ENCODE measurements at regions of chr19 and their contacts with region 1.

Region 1: DNA sequence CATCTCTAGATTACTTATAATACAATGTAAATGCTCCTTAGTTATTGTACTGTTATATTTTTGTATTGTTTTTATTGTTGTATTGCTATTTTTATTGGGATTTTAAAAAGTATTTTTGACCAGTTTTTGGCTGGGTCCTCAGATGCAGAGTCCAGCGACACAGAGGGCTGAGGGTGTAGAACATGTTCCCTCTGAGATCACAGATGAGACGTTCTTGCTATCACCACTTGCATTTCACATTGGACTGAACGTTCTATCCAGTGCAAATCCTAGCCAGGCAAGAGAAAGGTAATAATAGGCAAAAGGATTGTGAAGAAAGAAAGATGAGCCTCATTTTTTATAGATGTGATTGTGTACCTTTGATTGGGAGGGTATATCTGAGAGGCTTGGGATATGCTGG is 15.0 kb downstream of the ZSCAN5A start:
- DNase-seq: no peak
- H3K4me3 Mint-ChIP-seq: no peak overlapping the region
- H3K27ac Mint-ChIP-seq: peak overlapping the region; percentile 2
- H3K4me1 Mint-ChIP-seq: peaks cover 22% of the 10 kb centered on the region
- H3K27me3 Mint-ChIP-seq: no peaks in the 10 kb centered on the region

Region 2: DNA sequence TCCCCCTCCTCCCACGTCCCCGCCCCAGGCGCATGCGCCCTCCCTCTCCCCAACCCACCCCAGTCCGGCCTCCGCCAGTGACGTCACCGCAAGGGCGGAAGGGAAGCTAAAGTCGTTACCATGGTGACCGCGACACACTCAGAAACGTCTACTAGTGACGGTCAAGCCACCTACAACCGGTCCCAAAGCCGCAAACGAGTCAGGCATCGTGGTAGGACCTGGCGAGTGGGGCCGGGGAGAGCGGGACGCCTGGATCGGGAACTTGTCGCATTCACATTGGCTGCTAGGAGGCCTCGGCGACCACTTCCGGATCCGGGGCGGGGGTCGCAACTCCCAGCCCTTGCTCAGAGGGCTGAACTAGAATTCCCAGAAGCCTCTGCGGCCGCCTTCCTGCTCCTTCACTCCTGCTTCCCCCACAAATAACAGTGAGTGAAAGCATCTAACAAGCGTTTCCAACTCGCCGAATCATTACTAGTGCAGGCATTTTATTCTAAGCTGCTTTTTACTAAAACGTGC is 14.9 kb after region 1 on chr19 and contains the start of gene ZSCAN5A:
- CTCF ChIA-PET with region 1: interaction called, 13 read pairs
- POLR2A ChIA-PET with region 1: interaction called, 3 read pairs
- DNase-seq: peak; percentile 95
- H3K4me3 Mint-ChIP-seq: peak within 1 kb of the TSS; percentile 81
- H3K27ac Mint-ChIP-seq: peak within 1 kb of the TSS; percentile 97
- H3K4me1 Mint-ChIP-seq: peaks cover 23% of the 10 kb centered on the region
- H3K27me3 Mint-ChIP-seq: no peaks in the 10 kb centered on the region
- total RNA-seq, gene ZSCAN5A: 6.2 to 6.7 TPM

Measured in activated CD4-positive, alpha-beta memory T cell treated with anti-CD3 and anti-CD28 coated beads, Interleukin-2, amount 10 ng/mL, durations not matched to agents 7 days and 5 days (primary cell).